ENCODE measurements at regions of chr12 and their contacts with region 1.

Region 1: GRCh38 chr12:31959161-31959700 is at the start of gene RESF1:
- DNase-seq: peak; percentile 58 to 72 (median 64)
- H3K4me3 ChIP-seq: peak within 1 kb of the TSS; percentile 77 to 84 (median 83)
- H3K4me3 Mint-ChIP-seq: peak within 1 kb of the TSS; percentile 97 to 99
- H3K27ac ChIP-seq: peak within 1 kb of the TSS; percentile 88 to 92
- H3K27ac Mint-ChIP-seq: peak within 1 kb of the TSS; percentile 90 to 98 (median 95)
- H3K4me1 ChIP-seq: peaks cover 29 to 56% of the 10 kb centered on the region in 2 donors
- H3K4me1 Mint-ChIP-seq: peaks cover 60% of the 10 kb centered on the region
- H3K27me3 ChIP-seq: no peaks in the 10 kb centered on the region
- H3K27me3 Mint-ChIP-seq: peaks cover 0 to under 1% (median 0%) of the 10 kb centered on the region in 3 donors
- CTCF ChIP-seq: no peak
- polyA plus RNA-seq, gene RESF1: 26.8 to 82.9 (median 32.7) TPM

Region 2: GRCh38 chr12:31672521-31672920 is 286.7 kb before region 1 on chr12:
- intact Hi-C with region 1: loop called in 1 of 2 experiments (anchors 10 kb)
- DNase-seq: no peak
- H3K4me3 ChIP-seq: no peak overlapping the region
- H3K4me3 Mint-ChIP-seq: no peak overlapping the region
- H3K27ac ChIP-seq: no peak overlapping the region
- H3K27ac Mint-ChIP-seq: no peak overlapping the region
- H3K4me1 ChIP-seq: no peaks in the 10 kb centered on the region
- H3K4me1 Mint-ChIP-seq: no peaks in the 10 kb centered on the region
- H3K27me3 ChIP-seq: no peaks in the 10 kb centered on the region
- H3K27me3 Mint-ChIP-seq: peaks cover 0 to 3% (median 2%) of the 10 kb centered on the region in 3 donors
- CTCF ChIP-seq: no peak

Region 3: GRCh38 chr12:31682136-31682962 is 276.9 kb before region 1 on chr12:
- intact Hi-C with region 1: loop called (anchors 5 to 10 kb)
- DNase-seq: peak; percentile 76 to 88 (median 84)
- H3K4me3 ChIP-seq: no peak overlapping the region
- H3K4me3 Mint-ChIP-seq: no peak overlapping the region
- H3K27ac ChIP-seq: no peak overlapping the region
- H3K27ac Mint-ChIP-seq: peak overlapping the region in 6 of 7 donors; percentile 17 to 91 (median 80)
- H3K4me1 ChIP-seq: peaks cover 18 to 21% of the 10 kb centered on the region in 2 donors
- H3K4me1 Mint-ChIP-seq: peaks cover 18% of the 10 kb centered on the region
- H3K27me3 ChIP-seq: no peaks in the 10 kb centered on the region
- H3K27me3 Mint-ChIP-seq: peaks cover 0 to 1% (median 0%) of the 10 kb centered on the region in 3 donors
- CTCF ChIP-seq: peak; percentile 81

Region 4: GRCh38 chr12:31702047-31702446 is 257.2 kb before region 1 on chr12:
- intact Hi-C with region 1: loop called in 1 of 2 experiments (anchors 10 kb)
- DNase-seq: peak in 2 of 3 donors; percentile 21 to 33
- H3K4me3 ChIP-seq: no peak overlapping the region
- H3K4me3 Mint-ChIP-seq: no peak overlapping the region
- H3K27ac ChIP-seq: no peak overlapping the region
- H3K27ac Mint-ChIP-seq: no peak overlapping the region
- H3K4me1 ChIP-seq: no peaks in the 10 kb centered on the region
- H3K4me1 Mint-ChIP-seq: no peaks in the 10 kb centered on the region
- H3K27me3 ChIP-seq: no peaks in the 10 kb centered on the region
- H3K27me3 Mint-ChIP-seq: peaks cover 0 to 4% (median 0%) of the 10 kb centered on the region in 3 donors
- CTCF ChIP-seq: no peak

Region 5: GRCh38 chr12:31914927-31915326 is 44.3 kb before region 1 on chr12:
- intact Hi-C with region 1: loop called in 1 of 2 experiments (anchors 5 kb)
- DNase-seq: no peak
- H3K4me3 ChIP-seq: no peak overlapping the region
- H3K4me3 Mint-ChIP-seq: no peak overlapping the region
- H3K27ac ChIP-seq: no peak overlapping the region
- H3K27ac Mint-ChIP-seq: no peak overlapping the region
- H3K4me1 ChIP-seq: no peaks in the 10 kb centered on the region
- H3K4me1 Mint-ChIP-seq: no peaks in the 10 kb centered on the region
- H3K27me3 ChIP-seq: no peaks in the 10 kb centered on the region
- H3K27me3 Mint-ChIP-seq: peaks cover 0 to 1% (median 0%) of the 10 kb centered on the region in 3 donors
- CTCF ChIP-seq: no peak

Region 6: DNA sequence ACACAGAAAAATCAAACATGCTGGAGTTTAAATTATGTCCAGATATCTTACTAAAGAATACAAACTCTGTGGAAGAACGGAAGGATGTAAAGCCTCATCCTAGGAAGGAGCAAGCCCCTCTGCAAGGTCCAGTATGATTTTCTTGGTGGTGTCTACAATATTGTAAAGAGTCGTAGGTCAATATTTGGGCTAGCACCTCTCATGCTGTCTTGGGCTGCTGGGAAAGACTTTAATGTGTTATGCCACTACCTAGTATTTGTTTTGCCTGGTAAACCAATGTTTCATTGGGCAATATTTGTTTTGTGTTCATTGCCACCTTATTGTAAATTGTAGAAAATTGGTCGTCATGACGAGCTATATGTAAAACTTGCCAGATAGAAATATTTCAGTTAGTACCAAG is 26.6 kb after region 1 on chr12:
- intact Hi-C with region 1: no loop called
- DNase-seq: no peak
- H3K4me3 ChIP-seq: no peak overlapping the region
- H3K4me3 Mint-ChIP-seq: no peak overlapping the region
- H3K27ac ChIP-seq: no peak overlapping the region
- H3K27ac Mint-ChIP-seq: no peak overlapping the region
- H3K4me1 ChIP-seq: no peaks in the 10 kb centered on the region
- H3K4me1 Mint-ChIP-seq: no peaks in the 10 kb centered on the region
- H3K27me3 ChIP-seq: no peaks in the 10 kb centered on the region
- H3K27me3 Mint-ChIP-seq: peaks cover 0 to 2% (median 0%) of the 10 kb centered on the region in 3 donors
- CTCF ChIP-seq: no peak

Measured in CD14-positive monocyte (primary cell).